ENCODE measurements at regions of chrX and their contacts with region 1.

Region 1: DNA sequence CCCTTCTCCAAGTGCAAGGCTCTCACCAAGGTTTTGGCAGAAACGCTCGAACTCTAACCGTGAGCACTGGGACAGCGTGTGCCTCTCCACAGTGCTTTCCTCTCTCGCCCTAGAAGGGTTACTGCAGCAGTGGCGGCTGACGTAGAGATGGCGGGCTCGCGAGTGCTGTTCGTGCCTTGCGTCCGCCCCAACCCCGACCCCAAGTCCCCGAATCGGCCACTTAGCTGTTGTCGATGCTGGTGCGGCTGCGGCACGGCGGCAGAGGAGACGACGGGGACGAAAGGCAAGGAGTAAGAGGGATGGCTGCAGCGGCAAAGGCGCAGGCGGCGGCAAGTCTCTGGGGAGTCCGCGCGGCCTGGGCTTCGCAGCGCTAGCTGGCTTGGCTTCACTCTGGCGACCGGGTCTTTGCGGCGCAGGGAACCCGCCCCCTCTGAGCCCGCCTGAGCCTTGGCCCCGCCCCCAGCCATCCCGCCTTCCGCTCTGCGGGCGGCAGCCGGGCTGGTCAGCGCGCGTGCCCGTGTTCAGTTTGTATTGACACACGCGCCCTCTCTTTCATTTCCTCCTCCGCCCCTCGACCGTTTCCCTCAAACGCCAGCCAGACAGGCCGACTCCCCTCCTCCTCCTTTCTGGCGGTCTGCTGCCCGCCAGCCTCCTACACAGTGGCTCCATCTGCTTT is at the start of gene SPIN4:
- DNase-seq: peak; percentile 93 to 95
- ATAC-seq: peak; percentile 96
- H3K4me3 ChIP-seq: peak within 1 kb of the TSS; percentile 49 to 60
- H3K27ac ChIP-seq: peak within 1 kb of the TSS in 1 of 2 donors; percentile 80
- H3K4me1 ChIP-seq: no peaks in the 10 kb centered on the region
- H3K27me3 ChIP-seq: no peaks in the 10 kb centered on the region
- total RNA-seq, gene SPIN4: 9.8 to 12.3 TPM

Region 2: DNA sequence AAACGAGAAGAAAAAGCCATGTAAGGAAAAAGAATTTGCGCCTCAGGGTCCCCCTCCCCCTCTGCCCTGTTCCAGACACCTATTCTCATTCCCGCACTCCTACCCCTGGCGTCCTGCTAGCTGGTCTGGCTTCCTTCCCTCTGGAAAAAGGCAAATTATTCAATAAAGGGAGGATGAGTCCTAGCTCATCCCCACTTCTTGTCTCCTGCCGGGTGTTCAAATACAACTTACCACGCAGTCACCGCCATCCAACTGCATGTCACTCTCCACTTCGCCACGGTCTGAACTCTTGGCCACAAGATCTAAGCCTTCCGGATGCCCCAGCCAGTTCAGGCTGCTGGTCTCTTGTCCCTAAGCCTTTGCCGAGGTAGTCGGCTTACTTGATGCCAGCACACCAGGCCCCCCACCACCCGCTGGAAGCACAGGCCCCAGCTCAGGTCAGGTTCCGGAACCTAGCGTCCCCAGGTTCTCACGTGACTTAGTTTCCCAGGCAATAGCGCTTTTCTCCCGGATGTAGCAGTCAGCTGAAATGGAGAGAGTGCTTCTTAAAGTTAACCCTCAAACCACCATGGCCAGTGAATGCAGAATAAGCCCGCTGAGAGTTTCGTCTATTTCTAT is 209.6 kb after region 1 on chrX:
- intact Hi-C with region 1: loop called in 1 of 2 experiments (anchors 5 kb)
- DNase-seq: peak; percentile 56 to 79
- ATAC-seq: peak; percentile 90
- H3K4me3 ChIP-seq: peak overlapping the region; percentile 58 to 65
- H3K27ac ChIP-seq: peak overlapping the region in 1 of 2 donors; percentile 50
- H3K4me1 ChIP-seq: no peaks in the 10 kb centered on the region
- H3K27me3 ChIP-seq: no peaks in the 10 kb centered on the region

Region 3: DNA sequence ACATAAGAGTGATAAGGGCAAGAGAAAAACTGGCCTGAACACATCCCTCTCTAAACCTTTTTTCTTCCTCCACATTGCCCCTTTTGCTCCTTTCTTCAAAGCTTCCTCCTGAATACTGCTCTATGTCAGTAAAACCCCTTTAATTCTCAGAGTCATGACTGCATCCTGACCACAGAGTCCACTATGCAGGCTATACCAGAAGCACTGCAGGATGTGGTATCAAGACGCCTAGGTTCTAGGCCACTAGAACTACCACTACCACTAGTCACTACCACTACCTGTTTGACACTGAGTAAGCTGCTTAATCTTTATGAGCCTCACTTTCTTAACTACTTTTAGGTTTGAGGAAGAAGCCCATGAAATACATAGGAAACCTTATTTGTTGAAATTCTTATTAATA is 395.2 kb after region 1 on chrX:
- intact Hi-C with region 1: no loop called
- DNase-seq: no peak
- ATAC-seq: no peak
- H3K4me3 ChIP-seq: no peak overlapping the region
- H3K27ac ChIP-seq: peak overlapping the region in 1 of 2 donors; percentile 28
- H3K4me1 ChIP-seq: peaks cover 4% of the 10 kb centered on the region in 2 donors
- H3K27me3 ChIP-seq: no peaks in the 10 kb centered on the region